MCF 10A (cell line): ENCODE measurements at regions of chr1 and their contacts with region 1.

Region 1: GRCh38 chr1:219173758-219174588 is at the start of gene LYPLAL1:
- DNase-seq: peak; percentile 93
- H3K4me3 Mint-ChIP-seq: peak within 1 kb of the TSS; percentile 93
- H3K27ac Mint-ChIP-seq: peak within 1 kb of the TSS; percentile 84
- H3K4me1 Mint-ChIP-seq: peaks cover 37% of the 10 kb centered on the region
- H3K27me3 Mint-ChIP-seq: no peaks in the 10 kb centered on the region
- CTCF ChIP-seq: no peak
- total RNA-seq, gene LYPLAL1: 59.8 and 69.0 TPM in 2 replicates

Region 2: DNA sequence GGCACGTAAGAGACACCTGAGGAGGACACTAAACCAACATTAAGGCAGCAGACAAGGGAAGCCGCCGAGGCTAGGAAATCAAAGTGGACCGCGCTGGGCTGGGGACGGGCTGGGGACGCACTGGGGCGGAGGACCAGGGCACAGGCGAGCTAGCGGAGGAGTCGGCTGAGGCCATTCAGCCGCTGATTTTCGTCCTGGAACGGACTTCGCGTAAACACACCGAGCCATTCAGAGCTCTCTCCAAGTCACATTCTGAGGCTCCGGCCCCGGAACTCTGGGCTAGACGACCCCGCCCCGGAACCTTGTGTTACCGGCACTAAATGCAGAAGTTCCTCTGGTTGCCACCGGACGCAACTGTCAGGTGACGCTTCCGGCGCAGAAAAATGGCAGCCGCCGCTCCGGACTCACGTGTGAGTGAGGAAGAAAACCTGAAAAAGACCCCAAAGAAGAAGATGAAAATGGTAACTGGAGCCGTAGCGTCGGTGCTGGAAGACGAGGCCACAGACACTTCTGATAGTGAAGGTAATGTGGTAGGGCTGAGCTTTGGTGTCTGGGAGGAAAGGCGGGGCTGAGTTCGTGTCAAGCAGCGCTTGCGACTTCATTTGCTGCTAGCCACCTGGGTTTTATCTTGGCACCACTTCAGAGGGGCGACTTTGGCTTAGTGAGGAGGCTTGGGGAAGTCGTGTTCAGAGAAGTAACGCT is 888.9 kb before region 1 on chr1 and contains the start of gene RRP15:
- CTCF ChIA-PET with region 1: no interaction called
- POLR2A ChIA-PET with region 1: interaction called, 13 read pairs
- intact Hi-C with region 1: no loop called
- DNase-seq: peak; percentile 97
- H3K4me3 Mint-ChIP-seq: peak within 1 kb of the TSS; percentile 84
- H3K27ac Mint-ChIP-seq: peak within 1 kb of the TSS; percentile 91
- H3K4me1 Mint-ChIP-seq: peaks cover 18% of the 10 kb centered on the region
- H3K27me3 Mint-ChIP-seq: peaks cover 6% of the 10 kb centered on the region
- CTCF ChIP-seq: no peak
- total RNA-seq, gene RRP15: 65.8 and 83.1 TPM in 2 replicates

Region 3: GRCh38 chr1:219088778-219089557 is 85.0 kb before region 1 on chr1:
- CTCF ChIA-PET with region 1: no interaction called
- POLR2A ChIA-PET with region 1: interaction called, 8 read pairs
- intact Hi-C with region 1: loop called (anchors 2 kb)
- DNase-seq: peak; percentile 100
- H3K4me3 Mint-ChIP-seq: no peak overlapping the region
- H3K27ac Mint-ChIP-seq: peak overlapping the region; percentile 37
- H3K4me1 Mint-ChIP-seq: peaks cover 33% of the 10 kb centered on the region
- H3K27me3 Mint-ChIP-seq: no peaks in the 10 kb centered on the region
- CTCF ChIP-seq: no peak

Region 4: DNA sequence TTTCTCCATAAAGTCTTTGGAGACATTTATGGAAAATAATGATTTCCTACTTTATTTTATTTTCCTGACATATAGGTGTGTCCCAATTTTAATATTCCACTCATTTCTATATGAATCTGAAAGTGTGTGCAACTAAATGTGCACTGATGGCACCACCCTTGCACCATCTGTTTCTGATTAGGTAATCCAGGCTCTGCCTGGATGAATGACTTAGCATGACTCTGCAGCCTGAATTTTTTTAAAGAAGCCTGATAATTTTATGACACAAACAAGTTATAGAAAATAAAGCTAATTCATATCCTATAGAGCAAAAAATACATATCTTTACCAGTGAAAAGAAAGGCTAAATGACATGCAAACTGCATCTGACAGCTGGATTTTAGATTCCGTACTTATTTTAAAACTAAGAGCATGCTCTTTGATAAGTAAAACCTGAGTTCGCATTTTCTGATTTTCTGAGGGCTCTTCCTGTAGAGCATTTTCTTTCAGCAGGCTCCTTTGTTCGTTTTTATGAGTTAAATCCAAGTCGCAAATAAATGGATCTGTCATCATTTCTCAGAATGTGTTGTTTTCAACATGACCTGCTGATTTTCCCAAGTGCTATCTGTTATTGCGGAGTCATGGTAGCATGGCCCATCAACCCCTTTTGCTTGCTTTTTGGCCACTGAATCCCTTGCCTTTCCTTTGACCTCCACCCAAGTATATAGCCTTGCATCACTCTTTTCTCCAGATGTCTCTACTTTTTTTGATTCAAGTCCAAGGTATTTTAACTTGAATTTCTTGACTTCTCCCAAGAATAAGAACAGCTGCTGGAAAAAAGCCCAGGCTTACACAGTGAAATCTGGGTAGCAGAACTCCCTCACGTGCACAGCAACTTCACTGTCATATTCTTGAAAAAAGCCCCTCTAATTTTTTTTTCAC is 53.1 kb before region 1 on chr1:
- CTCF ChIA-PET with region 1: interaction called, 3 read pairs
- POLR2A ChIA-PET with region 1: interaction called, 16 read pairs
- intact Hi-C with region 1: no loop called
- DNase-seq: peak; percentile 79
- H3K4me3 Mint-ChIP-seq: no peak overlapping the region
- H3K27ac Mint-ChIP-seq: no peak overlapping the region
- H3K4me1 Mint-ChIP-seq: peaks cover 22% of the 10 kb centered on the region
- H3K27me3 Mint-ChIP-seq: no peaks in the 10 kb centered on the region
- CTCF ChIP-seq: no peak

Region 5: DNA sequence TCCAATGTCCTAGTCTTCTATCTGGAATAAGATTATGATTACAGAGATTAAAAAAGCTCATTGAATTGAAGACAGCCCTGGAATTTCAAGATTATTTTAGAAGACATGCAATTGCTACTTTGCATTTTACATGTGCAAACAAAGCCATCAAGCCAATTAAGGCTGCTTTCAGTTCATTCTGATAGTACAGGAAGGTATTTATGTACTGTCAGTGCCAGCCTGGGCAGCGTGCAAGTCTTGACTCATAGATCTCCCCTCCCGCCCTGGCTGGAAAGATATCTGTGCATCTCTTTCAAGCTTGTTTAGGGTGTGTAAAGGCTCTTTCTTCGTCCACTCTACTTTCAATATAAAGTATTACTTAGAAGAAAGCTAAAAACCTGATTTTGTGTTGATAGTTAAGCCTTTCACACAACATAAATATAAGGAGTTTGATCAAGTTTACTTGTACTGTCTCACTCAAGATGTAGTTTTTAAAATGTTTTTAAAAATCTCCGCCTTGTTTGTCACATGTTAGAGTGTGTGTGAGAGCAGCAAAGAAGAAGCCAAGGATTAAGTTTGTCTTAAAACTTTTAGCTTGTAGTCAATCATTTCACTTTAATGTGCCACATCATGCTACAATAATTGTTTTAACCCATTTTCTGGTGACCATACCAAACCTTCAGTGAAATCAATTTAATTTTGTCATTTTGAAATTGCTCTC is 13.9 kb before region 1 on chr1:
- CTCF ChIA-PET with region 1: interaction called, 8 read pairs
- POLR2A ChIA-PET with region 1: interaction called, 62 read pairs
- intact Hi-C with region 1: no loop called
- DNase-seq: peak; percentile 65
- H3K4me3 Mint-ChIP-seq: no peak overlapping the region
- H3K27ac Mint-ChIP-seq: no peak overlapping the region
- H3K4me1 Mint-ChIP-seq: peaks cover 6% of the 10 kb centered on the region
- H3K27me3 Mint-ChIP-seq: no peaks in the 10 kb centered on the region
- CTCF ChIP-seq: no peak

Region 6: DNA sequence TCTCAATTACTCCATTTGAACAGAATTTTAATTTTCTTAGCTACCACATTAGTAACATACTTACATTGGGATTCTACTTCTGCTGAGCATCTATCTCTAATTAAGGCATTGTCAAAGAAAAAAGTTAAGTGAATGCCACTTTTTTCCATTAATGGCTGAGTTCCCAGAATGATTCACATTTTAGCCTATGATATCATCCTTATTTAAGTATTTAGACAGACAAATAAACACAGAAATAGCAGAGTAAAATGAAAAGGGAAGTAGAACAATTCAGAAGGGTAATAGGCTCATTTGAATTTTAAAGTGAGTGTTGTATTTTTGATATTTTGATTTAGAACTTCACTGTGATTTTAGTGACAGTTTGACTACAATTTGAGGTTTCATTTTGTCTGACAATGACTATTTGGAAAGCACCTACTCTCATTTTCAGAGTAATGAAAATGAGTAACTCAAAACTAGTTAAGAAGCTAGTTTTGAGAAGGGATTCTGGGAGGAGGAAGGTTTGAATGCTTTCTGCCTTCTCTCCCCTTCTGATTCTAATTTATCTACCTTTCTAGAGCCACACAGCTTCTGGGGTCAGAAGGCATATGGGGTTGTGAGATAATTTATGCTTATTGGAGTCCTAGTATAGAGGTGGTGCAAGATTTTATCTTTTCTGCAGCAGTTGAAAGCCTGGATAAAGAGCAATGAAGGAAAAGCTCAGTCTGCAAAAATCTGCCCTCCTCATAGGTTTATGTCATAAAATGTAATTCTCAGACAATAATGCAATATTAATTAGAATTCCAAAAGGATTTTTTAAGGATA is 15.2 kb after region 1 on chr1:
- CTCF ChIA-PET with region 1: interaction called, 7 read pairs
- POLR2A ChIA-PET with region 1: interaction called, 93 read pairs
- intact Hi-C with region 1: no loop called
- DNase-seq: peak; percentile 42
- H3K4me3 Mint-ChIP-seq: no peak overlapping the region
- H3K27ac Mint-ChIP-seq: no peak overlapping the region
- H3K4me1 Mint-ChIP-seq: peaks cover 22% of the 10 kb centered on the region
- H3K27me3 Mint-ChIP-seq: no peaks in the 10 kb centered on the region
- CTCF ChIP-seq: no peak

Region 7: DNA sequence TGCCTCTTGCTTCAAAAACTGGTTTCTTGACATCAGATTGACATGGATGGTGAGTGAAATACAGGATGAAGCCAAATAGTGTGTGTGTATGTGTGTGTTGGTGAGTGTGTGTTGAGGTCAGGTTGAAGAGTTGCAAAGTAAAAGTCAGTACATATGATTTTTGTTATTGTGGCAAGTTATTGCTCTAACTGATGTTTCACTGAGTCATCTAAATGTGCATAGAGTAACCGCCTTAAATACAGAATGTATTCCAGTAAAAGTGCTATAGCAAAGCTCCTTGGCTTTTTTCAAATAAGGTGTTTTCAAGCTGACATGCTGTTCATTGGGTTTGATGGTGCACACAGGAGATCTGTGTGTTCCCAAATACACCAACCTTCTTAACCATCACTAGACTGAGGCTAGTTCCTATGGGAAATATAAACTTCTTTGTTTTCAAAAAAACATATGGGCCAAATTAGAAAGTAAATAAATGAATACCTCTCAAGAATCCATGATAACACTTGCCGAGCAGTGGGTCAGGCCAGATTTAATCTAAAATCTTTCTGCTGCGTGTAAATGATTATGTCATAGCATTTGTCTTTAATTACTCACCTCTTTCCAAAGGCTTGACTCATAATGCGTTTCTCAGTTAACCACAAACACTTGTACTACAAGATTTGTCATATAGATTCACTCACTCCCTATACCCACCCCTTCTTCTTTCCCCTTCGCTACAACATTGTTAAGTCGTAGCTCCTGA is 150.8 kb after region 1 on chr1:
- CTCF ChIA-PET with region 1: no interaction called
- POLR2A ChIA-PET with region 1: interaction called, 12 read pairs
- intact Hi-C with region 1: no loop called
- DNase-seq: peak; percentile 97
- H3K4me3 Mint-ChIP-seq: no peak overlapping the region
- H3K27ac Mint-ChIP-seq: no peak overlapping the region
- H3K4me1 Mint-ChIP-seq: peaks cover 16% of the 10 kb centered on the region
- H3K27me3 Mint-ChIP-seq: peaks cover 100% of the 10 kb centered on the region
- CTCF ChIP-seq: no peak